ENCODE measurements at regions of chr10 and their contacts with region 1.

Region 1: GRCh38 chr10:4849555-4850242 is 23.7 kb downstream of the AKR1E2 start:
- DNase-seq: peak; percentile 90

Region 2: GRCh38 chr10:4883079-4883739 is 33.5 kb after region 1 on chr10:
- intact Hi-C with region 1: no loop called
- DNase-seq: no peak

Region 3: DNA sequence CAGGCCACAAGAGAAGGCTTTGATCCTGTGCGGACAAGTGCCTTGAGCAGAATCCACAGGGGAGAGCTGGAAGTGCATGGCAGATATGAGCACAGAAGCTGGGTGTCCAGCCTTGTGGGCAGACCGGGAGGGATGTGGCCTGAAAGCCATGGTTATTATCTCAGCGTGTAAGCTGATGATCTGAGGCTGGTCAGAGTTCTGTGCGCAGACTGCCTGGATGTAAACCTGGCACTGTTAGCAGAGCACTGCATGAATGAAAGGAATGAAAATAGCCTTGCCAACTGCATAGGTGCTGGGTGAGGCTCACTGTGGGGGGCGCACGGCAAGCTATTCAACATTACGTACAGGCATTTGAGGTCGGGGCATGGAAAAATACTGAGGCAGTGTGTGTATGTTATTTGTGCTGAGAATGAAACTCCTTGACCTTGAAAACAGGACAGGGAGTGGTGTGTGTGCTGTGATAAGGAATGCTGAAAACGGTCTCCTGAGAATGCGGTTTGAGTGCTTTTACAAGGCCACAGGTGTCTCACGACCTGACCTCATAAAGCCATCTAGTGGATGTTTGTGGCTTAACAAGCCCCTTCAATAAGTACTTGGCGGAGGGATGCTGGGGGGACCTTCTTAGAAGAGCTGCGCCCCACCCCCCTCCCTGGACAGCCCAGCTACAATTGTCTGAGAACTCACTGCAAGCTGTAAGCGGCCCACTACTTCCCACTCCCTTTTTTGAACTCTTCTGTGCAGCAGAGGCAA is 132.2 kb after region 1 on chr10:
- intact Hi-C with region 1: loop called (anchors 5 kb)
- DNase-seq: no peak

Region 4: DNA sequence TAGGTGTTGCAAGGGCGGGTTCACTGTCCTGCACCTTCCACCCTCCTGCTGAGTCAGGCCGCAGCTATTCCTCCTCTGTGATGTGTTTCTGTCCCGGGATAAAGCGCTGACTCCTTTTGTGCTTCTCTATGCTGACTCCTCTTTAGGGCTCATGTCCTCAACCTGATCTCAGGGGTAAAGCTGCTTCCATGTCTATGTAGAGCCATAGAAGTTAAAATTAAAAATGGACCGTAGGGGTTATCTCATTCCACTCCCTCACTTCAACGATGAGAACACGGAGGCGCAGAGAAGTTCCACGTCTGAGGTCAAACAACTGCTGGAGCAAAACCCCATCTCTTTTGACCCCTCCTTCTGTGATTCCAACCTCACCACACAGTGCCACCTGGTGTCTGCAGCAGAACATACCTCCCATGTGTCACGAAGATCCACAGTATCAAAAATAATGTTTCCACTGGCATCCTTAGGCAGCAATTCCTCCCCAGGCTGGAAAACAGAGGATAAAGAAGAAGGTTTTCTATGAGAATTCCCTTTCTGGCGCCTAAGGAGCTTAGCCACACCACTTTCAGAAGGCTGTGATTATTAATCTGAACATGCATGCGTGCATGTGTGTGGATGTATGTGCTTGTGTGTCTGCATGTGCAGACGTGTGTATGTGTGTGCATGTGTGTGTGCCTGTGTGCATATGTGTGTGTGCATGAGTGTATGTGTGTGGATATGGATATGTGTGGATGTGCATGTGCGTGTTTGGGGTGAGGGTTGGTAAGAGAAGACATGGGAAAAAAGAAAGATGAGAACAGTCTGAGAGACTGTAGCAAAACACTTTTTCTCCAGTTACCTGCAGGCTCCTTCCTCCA is 433.8 kb after region 1 on chr10:
- intact Hi-C with region 1: loop called (anchors 2 kb)
- DNase-seq: peak; percentile 79

Region 5: GRCh38 chr10:5412277-5412941 is 562.7 kb after region 1 on chr10 and contains the start of gene NET1:
- intact Hi-C with region 1: loop called (anchors 10 kb)
- DNase-seq: peak; percentile 92
- total RNA-seq, gene NET1: 20.9 TPM